Stomach (tissue), 19 donors: ENCODE measurements at regions of chr19 and their contacts with region 1.

Region 1: GRCh38 chr19:29844891-29845572 is 33.2 kb downstream of the CCNE1 start:
- DNase-seq: peak; percentile 94 to 99
- H3K4me3 ChIP-seq: peak overlapping the region; percentile 61 to 90 (median 73)
- H3K27ac ChIP-seq: peak overlapping the region; percentile 83 to 97 (median 91)
- H3K4me1 ChIP-seq: peaks cover 21 to 28% (median 24%) of the 10 kb centered on the region in 4 donors
- H3K27me3 ChIP-seq: peaks cover 0 to 13% (median 7%) of the 10 kb centered on the region in 3 donors
- CTCF ChIP-seq: no peak
- EP300 ChIP-seq: no peak
- POLR2A ChIP-seq: no peak

Region 2: DNA sequence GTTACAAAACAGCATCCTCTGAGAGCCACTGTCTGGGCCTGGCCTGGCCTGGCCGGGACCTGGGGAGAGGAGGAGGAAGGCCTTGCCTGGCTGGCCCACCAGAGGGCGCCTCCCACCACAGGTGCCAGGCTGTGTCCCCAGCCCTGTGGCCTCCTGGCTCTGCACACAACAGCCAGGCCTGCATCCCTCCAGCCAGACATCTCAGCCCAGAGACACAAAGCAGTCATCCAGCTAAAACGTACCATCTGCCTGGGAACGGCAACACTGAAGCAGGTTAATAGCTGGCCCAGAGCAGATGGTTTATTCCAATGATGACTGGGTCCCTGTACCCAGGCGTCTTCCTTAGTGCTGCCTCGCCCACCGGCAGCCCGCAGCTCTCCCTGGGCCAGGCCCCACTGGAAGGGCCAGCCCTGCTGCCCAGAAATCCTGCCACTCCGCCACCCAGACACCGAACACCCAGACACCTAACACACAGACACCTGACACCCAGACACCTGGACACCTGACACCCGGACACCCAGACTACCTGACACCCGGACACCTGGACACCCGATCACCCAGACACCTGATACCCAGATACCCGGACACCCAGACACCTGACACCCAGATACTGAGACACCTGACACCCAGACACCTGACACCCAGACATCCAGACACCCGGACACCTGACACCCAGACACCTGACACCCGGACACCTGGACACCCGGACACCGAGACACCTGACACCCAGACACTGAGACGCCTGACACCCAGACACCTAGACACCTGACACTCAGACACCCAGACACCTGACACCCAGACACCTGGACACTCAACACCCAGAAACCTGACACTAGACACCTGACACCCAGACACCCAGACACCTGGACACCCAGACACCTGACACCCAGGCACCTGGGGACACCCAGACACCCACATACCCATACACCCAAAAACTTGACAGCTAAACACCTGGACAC is 150.1 kb before region 1 on chr19:
- intact Hi-C with region 1: no loop called
- DNase-seq: peak; percentile 82 to 91
- H3K4me3 ChIP-seq: no peak overlapping the region
- H3K27ac ChIP-seq: no peak overlapping the region
- H3K4me1 ChIP-seq: peaks cover 0 to 11% (median 8%) of the 10 kb centered on the region in 4 donors
- H3K27me3 ChIP-seq: no peaks in the 10 kb centered on the region
- CTCF ChIP-seq: peak in 5 of 7 experiments; percentile 56 to 89 (median 87)
- EP300 ChIP-seq: no peak
- POLR2A ChIP-seq: no peak

Region 3: GRCh38 chr19:29811125-29812079 is 33.6 kb before region 1 on chr19 and contains the start of gene CCNE1:
- intact Hi-C with region 1: loop called (anchors 5 kb)
- DNase-seq: peak; percentile 97
- H3K4me3 ChIP-seq: peak within 1 kb of the TSS; percentile 62 to 79 (median 64)
- H3K27ac ChIP-seq: peak within 1 kb of the TSS; percentile 58 to 85 (median 75)
- H3K4me1 ChIP-seq: peaks cover 10 to 19% (median 15%) of the 10 kb centered on the region in 4 donors
- H3K27me3 ChIP-seq: no peaks in the 10 kb centered on the region
- CTCF ChIP-seq: no peak
- EP300 ChIP-seq: no peak
- POLR2A ChIP-seq: no peak
- total RNA-seq, gene CCNE1: 3.2 to 3.7 TPM in 2 of 5 donors, not detected in the others